Activated CD4-positive, alpha-beta T cell treated with anti-CD3 and anti-CD28 coated beads for 36 hours (primary cell): ENCODE measurements at regions of chr7 and their contacts with region 1.

Region 1: DNA sequence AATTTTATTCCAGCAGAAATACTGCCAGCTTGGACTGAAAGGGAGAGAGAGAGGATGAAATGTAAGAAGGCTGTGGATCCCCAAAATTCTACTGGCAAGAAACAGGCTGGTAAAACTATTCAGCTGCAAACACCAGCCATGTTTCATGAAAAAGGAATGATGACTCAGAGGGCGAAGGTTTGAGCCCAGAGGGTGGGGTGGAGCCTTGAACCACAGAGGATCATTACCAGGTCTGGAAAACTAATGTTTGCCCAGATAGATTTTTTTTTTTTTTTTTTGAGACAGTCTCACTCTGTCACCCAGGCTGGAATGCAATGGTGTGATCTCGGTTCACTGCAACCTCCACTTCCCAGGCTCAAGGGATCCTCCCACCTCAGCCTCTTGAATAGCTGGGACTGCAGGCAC is 41.7 kb upstream of the NRF1 start:
- DNase-seq: no peak
- ATAC-seq: no peak
- H3K4me3 Mint-ChIP-seq: no peak overlapping the region
- H3K27ac Mint-ChIP-seq: no peak overlapping the region
- H3K4me1 Mint-ChIP-seq: peaks cover 3% of the 10 kb centered on the region
- H3K27me3 Mint-ChIP-seq: peaks cover 19% of the 10 kb centered on the region

Region 2: GRCh38 chr7:129188892-129189660 is 380.7 kb before region 1 on chr7:
- CTCF ChIA-PET with region 1: interaction called, 4 read pairs
- POLR2A ChIA-PET with region 1: interaction called, 10 read pairs
- intact Hi-C with region 1: no loop called
- DNase-seq: no peak
- ATAC-seq: peak; percentile 47
- H3K4me3 Mint-ChIP-seq: peak overlapping the region; percentile 56
- H3K27ac Mint-ChIP-seq: no peak overlapping the region
- H3K4me1 Mint-ChIP-seq: peaks cover 7% of the 10 kb centered on the region
- H3K27me3 Mint-ChIP-seq: peaks cover 42% of the 10 kb centered on the region

Region 3: GRCh38 chr7:129958643-129959470 is 389.0 kb after region 1 on chr7:
- CTCF ChIA-PET with region 1: no interaction called
- POLR2A ChIA-PET with region 1: no interaction called
- intact Hi-C with region 1: no loop called
- DNase-seq: no peak
- ATAC-seq: no peak
- H3K4me3 Mint-ChIP-seq: no peak overlapping the region
- H3K27ac Mint-ChIP-seq: peak overlapping the region; percentile 14
- H3K4me1 Mint-ChIP-seq: no peaks in the 10 kb centered on the region
- H3K27me3 Mint-ChIP-seq: no peaks in the 10 kb centered on the region